ENCODE measurements at regions of chr13 and their contacts with region 1.

Region 1: GRCh38 chr13:107144432-107144831 is 576.5 kb upstream of the ARGLU1 start:
- DNase-seq: peak; percentile 12
- ATAC-seq: no peak
- H3K4me3 ChIP-seq: no peak overlapping the region
- H3K27ac ChIP-seq: no peak overlapping the region
- H3K4me1 ChIP-seq: no peaks in the 10 kb centered on the region
- H3K27me3 ChIP-seq: peaks cover 15% of the 10 kb centered on the region
- CTCF ChIP-seq: peak; percentile 47

Region 2: GRCh38 chr13:105642511-105642958 is 1501.9 kb before region 1 on chr13:
- CTCF ChIA-PET with region 1: no interaction called
- POLR2A ChIA-PET with region 1: interaction called, 20 read pairs
- intact Hi-C with region 1: no loop called
- DNase-seq: peak; percentile 40
- ATAC-seq: peak; percentile 53
- H3K4me3 ChIP-seq: no peak overlapping the region
- H3K27ac ChIP-seq: no peak overlapping the region
- H3K4me1 ChIP-seq: no peaks in the 10 kb centered on the region
- H3K27me3 ChIP-seq: no peaks in the 10 kb centered on the region
- CTCF ChIP-seq: no peak

Region 3: GRCh38 chr13:107043021-107043956 is 101.1 kb before region 1 on chr13:
- CTCF ChIA-PET with region 1: no interaction called
- POLR2A ChIA-PET with region 1: no interaction called
- intact Hi-C with region 1: no loop called
- DNase-seq: no peak
- ATAC-seq: no peak
- H3K4me3 ChIP-seq: no peak overlapping the region
- H3K27ac ChIP-seq: no peak overlapping the region
- H3K4me1 ChIP-seq: no peaks in the 10 kb centered on the region
- H3K27me3 ChIP-seq: peaks cover 5% of the 10 kb centered on the region; the same call in 1 of the 2 replicates
- CTCF ChIP-seq: no peak

Measured in PC-3 (cell line).